ENCODE measurements at regions of chr22 and their contacts with region 1.

Region 1: GRCh38 chr22:42814215-42814614 is 42.9 kb downstream of the ARFGAP3 start:
- DNase-seq: no peak
- H3K4me3 ChIP-seq: no peak overlapping the region
- H3K27ac ChIP-seq: no peak overlapping the region
- H3K4me1 ChIP-seq: no peaks in the 10 kb centered on the region
- H3K27me3 ChIP-seq: no peaks in the 10 kb centered on the region
- CTCF ChIP-seq: no peak

Region 2: GRCh38 chr22:42509548-42509947 is 304.7 kb before region 1 on chr22:
- CTCF ChIA-PET with region 1: no interaction called
- POLR2A ChIA-PET with region 1: interaction called, 21 read pairs
- intact Hi-C with region 1: no loop called
- DNase-seq: no peak
- H3K4me3 ChIP-seq: no peak overlapping the region
- H3K27ac ChIP-seq: no peak overlapping the region
- H3K4me1 ChIP-seq: no peaks in the 10 kb centered on the region
- H3K27me3 ChIP-seq: no peaks in the 10 kb centered on the region
- CTCF ChIP-seq: no peak

Measured in PC-9 (cell line).